BJ (cell line): ENCODE measurements at regions of chr3 and their contacts with region 1.

Region 1: GRCh38 chr3:25094932-25095685 is 333.0 kb upstream of the RARB start:
- DNase-seq: no peak
- H3K4me3 ChIP-seq: no peak overlapping the region
- H3K27me3 ChIP-seq: no peaks in the 10 kb centered on the region
- CTCF ChIP-seq: peak; percentile 20; the same call in 1 of the 2 replicates

Region 2: GRCh38 chr3:23981955-23982354 is 1113.2 kb before region 1 on chr3:
- CTCF ChIA-PET with region 1: no interaction called
- POLR2A ChIA-PET with region 1: no interaction called
- DNase-seq: no peak
- H3K4me3 ChIP-seq: no peak overlapping the region
- H3K27me3 ChIP-seq: no peaks in the 10 kb centered on the region
- CTCF ChIP-seq: no peak

Region 3: GRCh38 chr3:25021816-25022215 is 73.3 kb before region 1 on chr3:
- CTCF ChIA-PET with region 1: interaction called, 12 read pairs
- POLR2A ChIA-PET with region 1: no interaction called
- DNase-seq: no peak
- H3K4me3 ChIP-seq: no peak overlapping the region
- H3K27me3 ChIP-seq: no peaks in the 10 kb centered on the region
- CTCF ChIP-seq: peak; percentile 74

Region 4: DNA sequence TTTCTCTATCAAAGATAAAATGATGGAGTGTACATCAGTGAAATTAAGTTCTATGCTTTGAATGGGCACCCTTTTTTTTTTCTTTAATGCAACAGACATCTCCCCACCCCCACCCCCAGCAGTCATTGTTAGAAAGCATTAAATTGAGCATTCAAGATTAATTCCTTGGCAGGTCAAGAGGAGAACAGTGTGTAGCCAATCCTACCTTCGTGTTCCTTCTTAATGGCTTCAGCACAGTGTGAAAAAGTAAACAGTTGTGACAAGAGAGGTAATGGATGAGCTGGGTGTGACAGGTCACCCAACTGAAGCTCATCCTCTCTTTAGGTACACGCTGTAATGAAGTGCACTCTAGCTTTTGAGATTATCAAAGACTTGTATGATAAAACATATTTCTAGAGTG is 134.5 kb after region 1 on chr3:
- CTCF ChIA-PET with region 1: no interaction called
- POLR2A ChIA-PET with region 1: no interaction called
- DNase-seq: no peak
- H3K4me3 ChIP-seq: no peak overlapping the region
- H3K27me3 ChIP-seq: no peaks in the 10 kb centered on the region
- CTCF ChIP-seq: no peak